ENCODE measurements at regions of chr4 and their contacts with region 1.

Region 1: GRCh38 chr4:183471946-183472708 is 27.7 kb downstream of the CDKN2AIP start:
- DNase-seq: peak; percentile 81 to 87
- H3K4me3 ChIP-seq: no peak overlapping the region
- H3K4me3 Mint-ChIP-seq: no peak overlapping the region
- H3K27ac Mint-ChIP-seq: no peak overlapping the region
- H3K4me1 ChIP-seq: peaks cover 14% of the 10 kb centered on the region
- H3K4me1 Mint-ChIP-seq: peaks cover 7% of the 10 kb centered on the region
- H3K27me3 ChIP-seq: no peaks in the 10 kb centered on the region
- H3K27me3 Mint-ChIP-seq: no peaks in the 10 kb centered on the region
- CTCF ChIP-seq: peak; percentile 72

Region 2: DNA sequence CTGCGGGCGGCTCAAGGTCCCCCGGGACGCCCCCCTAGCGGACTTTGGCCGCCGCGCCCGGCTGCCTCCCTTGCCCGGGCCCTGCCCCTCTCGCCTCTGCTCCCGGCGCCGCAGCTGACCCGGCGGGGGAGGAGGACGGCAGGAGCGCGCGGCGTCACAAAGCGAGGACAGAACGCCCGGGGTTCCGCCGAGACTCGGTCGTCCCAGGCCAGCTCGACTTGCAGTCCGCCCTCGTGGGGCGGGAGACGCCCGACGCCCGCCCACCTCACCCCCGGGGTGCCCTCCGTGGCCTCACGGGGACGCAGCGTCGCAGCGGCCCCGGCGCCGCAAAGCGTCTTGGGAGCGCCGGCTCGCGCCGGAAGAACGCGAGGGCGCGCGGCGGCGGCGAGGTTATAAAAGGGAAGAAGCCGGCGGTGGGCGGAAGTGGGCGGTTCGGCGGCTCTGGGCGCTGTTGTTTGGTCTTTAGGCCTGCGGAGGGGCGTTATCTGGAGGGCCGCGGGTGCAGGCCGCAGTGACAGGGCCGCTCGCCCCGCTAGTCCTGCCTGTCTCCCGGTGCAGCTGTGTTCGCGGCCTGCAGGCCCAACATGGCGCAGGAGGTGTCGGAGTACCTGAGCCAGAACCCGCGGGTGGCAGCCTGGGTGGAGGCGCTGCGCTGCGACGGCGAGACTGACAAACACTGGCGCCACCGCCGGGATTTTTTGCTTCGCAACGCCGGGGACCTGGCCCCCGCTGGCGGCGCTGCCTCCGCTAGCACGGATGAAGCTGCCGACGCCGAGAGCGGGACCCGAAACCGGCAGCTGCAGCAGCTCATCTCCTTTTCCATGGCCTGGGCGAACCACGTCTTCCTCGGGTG is 27.7 kb before region 1 on chr4 and contains the start of gene CDKN2AIP:
- CTCF ChIA-PET with region 1: no interaction called
- POLR2A ChIA-PET with region 1: no interaction called
- intact Hi-C with region 1: loop called (anchors 1 kb)
- DNase-seq: peak; percentile 94
- H3K4me3 ChIP-seq: peak within 1 kb of the TSS; percentile 93
- H3K4me3 Mint-ChIP-seq: peak within 1 kb of the TSS; percentile 93
- H3K27ac Mint-ChIP-seq: peak within 1 kb of the TSS; percentile 94
- H3K4me1 ChIP-seq: peaks cover 39% of the 10 kb centered on the region
- H3K4me1 Mint-ChIP-seq: peaks cover 14% of the 10 kb centered on the region
- H3K27me3 ChIP-seq: no peaks in the 10 kb centered on the region
- H3K27me3 Mint-ChIP-seq: no peaks in the 10 kb centered on the region
- CTCF ChIP-seq: peak in 1 of 2 experiments; percentile 12
- total RNA-seq, gene CDKN2AIP: 13.9 and 17.5 TPM in 2 replicates

Region 3: DNA sequence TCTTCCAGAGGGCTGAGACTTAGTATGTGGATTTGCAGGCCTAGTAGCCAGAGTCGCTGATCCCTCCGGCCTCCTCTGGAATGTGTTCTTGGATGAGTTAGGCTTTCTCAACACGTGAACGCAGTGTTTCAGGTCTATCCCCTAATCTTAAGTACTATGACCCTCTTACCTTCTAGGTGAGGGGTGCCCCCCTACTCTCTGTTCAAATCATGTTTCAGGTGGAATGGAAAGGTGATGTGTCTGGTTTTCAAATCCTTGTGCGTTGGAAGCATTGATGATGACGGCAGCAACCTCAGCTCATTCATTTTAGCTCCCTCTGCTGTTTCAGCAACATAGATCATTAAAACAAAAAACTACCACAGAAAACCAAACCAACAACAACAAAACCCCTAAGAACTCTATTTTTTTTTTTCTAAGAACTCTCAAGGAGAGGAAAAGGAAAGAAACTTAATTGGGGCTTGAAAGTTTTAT is 130.5 kb after region 1 on chr4:
- CTCF ChIA-PET with region 1: interaction called, 4 read pairs
- POLR2A ChIA-PET with region 1: no interaction called
- intact Hi-C with region 1: loop called (anchors 1 kb)
- DNase-seq: no peak
- H3K4me3 ChIP-seq: no peak overlapping the region
- H3K4me3 Mint-ChIP-seq: no peak overlapping the region
- H3K27ac Mint-ChIP-seq: no peak overlapping the region
- H3K4me1 ChIP-seq: no peaks in the 10 kb centered on the region
- H3K4me1 Mint-ChIP-seq: no peaks in the 10 kb centered on the region
- H3K27me3 ChIP-seq: no peaks in the 10 kb centered on the region
- H3K27me3 Mint-ChIP-seq: no peaks in the 10 kb centered on the region
- CTCF ChIP-seq: peak in 1 of 2 experiments; percentile 31

Region 4: DNA sequence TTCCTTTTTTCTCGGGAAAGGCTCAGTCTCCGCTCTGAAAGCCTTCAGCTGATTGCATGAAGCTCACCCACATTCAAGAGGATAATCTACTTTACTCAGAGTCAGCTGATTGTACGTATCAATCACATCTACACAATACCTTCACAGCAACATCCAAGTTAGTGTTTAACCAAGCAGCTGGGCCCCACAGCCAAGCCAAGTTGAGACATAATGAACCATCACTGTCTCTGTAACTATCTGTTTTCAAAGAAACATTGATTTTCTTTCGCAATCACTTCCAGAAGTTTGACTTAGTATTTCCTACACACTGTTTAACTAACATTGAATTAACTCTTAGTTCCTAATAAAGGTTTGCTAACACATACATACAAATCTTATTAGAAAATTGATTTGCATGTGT is 146.6 kb after region 1 on chr4:
- CTCF ChIA-PET with region 1: no interaction called
- POLR2A ChIA-PET with region 1: no interaction called
- intact Hi-C with region 1: loop called (anchors 5 kb)
- DNase-seq: peak; percentile 49 to 57
- H3K4me3 ChIP-seq: no peak overlapping the region
- H3K4me3 Mint-ChIP-seq: peak overlapping the region; percentile 46
- H3K27ac Mint-ChIP-seq: no peak overlapping the region
- H3K4me1 ChIP-seq: peaks cover 15% of the 10 kb centered on the region
- H3K4me1 Mint-ChIP-seq: peaks cover 14% of the 10 kb centered on the region
- H3K27me3 ChIP-seq: no peaks in the 10 kb centered on the region
- H3K27me3 Mint-ChIP-seq: no peaks in the 10 kb centered on the region
- CTCF ChIP-seq: no peak

Region 5: DNA sequence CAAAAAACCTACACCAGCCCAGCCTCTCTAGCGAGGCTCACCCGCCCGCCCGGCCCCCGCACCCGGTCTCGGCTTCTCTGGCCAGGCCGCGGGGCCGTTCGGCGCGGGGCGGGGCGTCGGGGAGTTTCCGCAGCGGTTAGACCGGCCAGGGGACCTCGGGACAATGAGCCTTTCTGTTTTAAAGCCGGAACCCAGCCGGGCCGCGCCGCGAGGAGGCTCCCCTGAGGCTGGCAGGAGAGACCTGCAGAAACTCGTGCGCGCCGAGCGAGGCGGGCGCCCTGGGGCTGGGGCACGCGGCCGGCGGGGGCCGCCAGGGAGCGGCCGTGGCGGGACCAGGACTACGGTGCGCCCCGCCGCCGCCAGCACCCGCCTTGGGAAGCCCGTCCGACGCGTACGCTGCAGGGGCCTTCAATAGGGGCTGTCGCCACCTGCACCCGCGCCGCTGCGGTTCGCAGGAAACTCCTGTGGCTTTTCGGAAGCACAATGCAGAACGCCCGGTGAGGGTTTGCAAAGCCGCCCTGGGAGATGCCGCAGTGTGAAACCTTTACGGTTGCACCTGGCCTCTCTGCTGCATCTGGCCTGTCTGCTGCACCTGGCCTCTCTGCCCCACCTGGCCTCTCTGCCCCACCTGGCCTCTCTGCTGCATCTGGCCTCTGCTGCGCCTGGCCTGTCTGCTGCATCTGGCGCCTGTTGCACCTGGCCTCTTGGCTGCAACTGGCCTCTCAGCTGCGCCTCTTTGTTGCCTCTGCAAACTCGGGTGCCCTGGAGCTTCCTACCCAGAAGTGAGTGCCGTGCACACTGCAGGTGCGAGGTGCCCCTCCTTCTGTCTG is 250.8 kb after region 1 on chr4:
- CTCF ChIA-PET with region 1: no interaction called
- POLR2A ChIA-PET with region 1: no interaction called
- intact Hi-C with region 1: loop called (anchors 1 kb)
- DNase-seq: peak; percentile 72 to 78
- H3K4me3 ChIP-seq: peak overlapping the region; percentile 39
- H3K4me3 Mint-ChIP-seq: peak overlapping the region; percentile 78
- H3K27ac Mint-ChIP-seq: peak overlapping the region; percentile 45
- H3K4me1 ChIP-seq: no peaks in the 10 kb centered on the region
- H3K4me1 Mint-ChIP-seq: no peaks in the 10 kb centered on the region
- H3K27me3 ChIP-seq: no peaks in the 10 kb centered on the region
- H3K27me3 Mint-ChIP-seq: no peaks in the 10 kb centered on the region
- CTCF ChIP-seq: no peak

Region 6: DNA sequence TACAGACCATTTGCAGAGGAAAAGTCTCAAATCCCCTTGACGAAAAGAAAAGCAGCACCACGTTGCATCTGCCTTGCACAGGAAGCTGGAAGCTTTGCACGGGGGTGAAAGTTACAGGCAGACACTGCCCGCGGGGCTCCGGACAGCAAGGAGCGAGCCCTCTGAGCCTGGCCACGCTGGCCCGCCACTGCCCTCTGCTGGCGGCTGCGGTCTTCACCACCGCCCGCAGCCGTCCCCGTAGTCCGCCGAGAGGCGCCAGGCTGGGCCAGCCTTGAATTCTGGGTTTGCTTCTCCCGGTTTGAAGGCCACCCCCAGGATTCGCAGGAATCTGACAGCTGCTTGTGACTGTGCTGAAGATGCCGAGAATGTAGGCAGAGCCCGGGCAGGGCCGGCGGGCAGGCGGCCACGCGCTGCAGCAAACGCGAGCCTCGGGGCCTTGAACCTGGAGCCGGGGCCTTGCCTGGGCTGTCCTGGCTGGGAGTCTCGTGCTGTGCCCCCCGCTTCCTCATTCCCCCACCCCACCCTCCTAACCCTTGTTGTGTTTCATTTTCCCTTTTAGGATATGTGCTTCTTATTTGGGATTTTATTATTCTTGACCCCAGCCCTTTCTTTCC is 696.4 kb after region 1 on chr4:
- CTCF ChIA-PET with region 1: no interaction called
- POLR2A ChIA-PET with region 1: no interaction called
- intact Hi-C with region 1: loop called (anchors 10 kb)
- DNase-seq: peak; percentile 54 to 75
- H3K4me3 ChIP-seq: no peak overlapping the region
- H3K4me3 Mint-ChIP-seq: no peak overlapping the region
- H3K27ac Mint-ChIP-seq: no peak overlapping the region
- H3K4me1 ChIP-seq: peaks cover 7% of the 10 kb centered on the region
- H3K4me1 Mint-ChIP-seq: no peaks in the 10 kb centered on the region
- H3K27me3 ChIP-seq: no peaks in the 10 kb centered on the region
- H3K27me3 Mint-ChIP-seq: peaks cover 5% of the 10 kb centered on the region
- CTCF ChIP-seq: peak; percentile 79 to 90